ENCODE measurements at regions of chr3 and their contacts with region 1.

Region 1: DNA sequence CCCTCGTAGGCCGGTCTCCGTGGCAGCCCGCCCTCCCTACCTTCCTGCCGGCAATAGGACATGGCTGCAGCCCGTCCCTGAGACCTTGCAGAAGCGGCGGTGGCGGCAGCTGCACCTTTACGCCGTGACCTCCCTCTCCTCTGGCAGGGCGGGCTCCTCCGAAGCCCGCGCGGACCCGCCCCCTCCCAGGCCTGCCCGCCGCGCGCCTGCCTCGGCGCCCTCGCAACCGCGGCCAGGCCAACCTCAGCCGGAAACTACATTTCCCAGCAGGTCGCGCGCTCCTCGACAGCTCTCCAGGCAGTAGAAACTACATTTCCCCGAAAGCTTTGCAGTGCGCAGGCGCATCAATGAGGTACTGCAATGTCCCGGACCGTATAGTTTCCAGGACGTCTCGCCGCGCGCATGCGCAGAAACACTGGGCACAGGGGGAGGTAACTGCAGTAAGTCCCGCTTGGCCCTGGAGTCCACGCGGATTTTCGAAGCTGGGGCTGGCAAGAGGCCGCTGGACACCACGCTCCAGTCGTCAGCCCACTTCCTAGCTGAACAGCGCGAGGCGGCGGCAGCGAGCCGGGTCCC is at the starts of genes CHCHD4 and TMEM43:
- DNase-seq: peak; percentile 99
- H3K4me3 Mint-ChIP-seq: peak within 1 kb of the TSS; percentile 93
- H3K27ac Mint-ChIP-seq: peak within 1 kb of the TSS; percentile 92
- H3K4me1 Mint-ChIP-seq: peaks cover 50% of the 10 kb centered on the region
- H3K27me3 Mint-ChIP-seq: no peaks in the 10 kb centered on the region
- total RNA-seq, gene CHCHD4: 16.2 to 17.9 TPM
- total RNA-seq, gene TMEM43: 18.3 to 19.8 TPM

Region 2: DNA sequence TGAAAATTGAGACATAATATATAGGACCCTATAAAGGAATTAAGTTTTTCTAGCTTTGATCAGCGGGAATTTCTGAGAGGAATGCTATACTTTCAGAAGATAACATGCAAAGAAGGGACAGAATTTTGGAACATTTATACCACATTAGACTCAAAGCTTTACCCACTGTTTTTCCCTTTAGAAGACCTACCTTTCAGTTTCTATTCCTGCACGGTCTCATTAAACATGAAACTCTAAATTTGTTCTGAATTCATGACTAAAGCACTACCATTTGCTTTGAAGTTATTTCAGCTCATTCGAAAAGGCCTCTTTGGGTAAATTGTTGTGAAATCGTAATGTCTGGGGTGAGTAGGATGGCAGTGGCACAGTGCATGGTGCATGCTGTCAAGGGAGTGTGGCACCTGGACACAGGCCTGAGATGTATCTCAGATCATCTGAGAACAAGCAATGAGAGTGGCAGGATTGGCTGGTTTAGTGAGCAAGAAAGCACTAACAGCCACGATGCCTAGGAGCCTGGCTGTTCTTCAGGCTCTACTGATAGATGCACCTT is 42.5 kb before region 1 on chr3:
- CTCF ChIA-PET with region 1: no interaction called
- intact Hi-C with region 1: loop called (anchors 1 kb)
- DNase-seq: peak; percentile 45
- H3K4me3 Mint-ChIP-seq: no peak overlapping the region
- H3K27ac Mint-ChIP-seq: no peak overlapping the region
- H3K4me1 Mint-ChIP-seq: peaks cover 12% of the 10 kb centered on the region
- H3K27me3 Mint-ChIP-seq: peaks cover 2% of the 10 kb centered on the region

Region 3: GRCh38 chr3:14144423-14145075 is 19.8 kb after region 1 on chr3:
- CTCF ChIA-PET with region 1: interaction called, 3 read pairs
- intact Hi-C with region 1: loop called (anchors 1 kb)
- DNase-seq: peak; percentile 70
- H3K4me3 Mint-ChIP-seq: peak overlapping the region; percentile 19
- H3K27ac Mint-ChIP-seq: peak overlapping the region; percentile 81
- H3K4me1 Mint-ChIP-seq: peaks cover 48% of the 10 kb centered on the region
- H3K27me3 Mint-ChIP-seq: no peaks in the 10 kb centered on the region